ENCODE measurements at regions of chr2 and their contacts with region 1.

Region 1: GRCh38 chr2:28566521-28567041 is 70.7 kb downstream of the PLB1 start:
- DNase-seq: peak; percentile 65
- ATAC-seq: peak; percentile 96
- H3K4me3 ChIP-seq: peak overlapping the region; percentile 54 to 77 (median 69)
- H3K27ac ChIP-seq: no peak overlapping the region
- H3K4me1 ChIP-seq: peaks cover 7% of the 10 kb centered on the region
- H3K27me3 ChIP-seq: peaks cover 0 to 28% of the 10 kb centered on the region in 2 experiments; a peak in 4 of 5 replicates
- CTCF ChIP-seq: peak; percentile 96
- EP300 ChIP-seq: 0 out of 4 replicates have a peak, but pooled peaks of 1 of the 2 experiments have one; percentile 53
- POLR2A ChIP-seq: no peak
- RAD21 ChIP-seq: peak; percentile 96

Region 2: DNA sequence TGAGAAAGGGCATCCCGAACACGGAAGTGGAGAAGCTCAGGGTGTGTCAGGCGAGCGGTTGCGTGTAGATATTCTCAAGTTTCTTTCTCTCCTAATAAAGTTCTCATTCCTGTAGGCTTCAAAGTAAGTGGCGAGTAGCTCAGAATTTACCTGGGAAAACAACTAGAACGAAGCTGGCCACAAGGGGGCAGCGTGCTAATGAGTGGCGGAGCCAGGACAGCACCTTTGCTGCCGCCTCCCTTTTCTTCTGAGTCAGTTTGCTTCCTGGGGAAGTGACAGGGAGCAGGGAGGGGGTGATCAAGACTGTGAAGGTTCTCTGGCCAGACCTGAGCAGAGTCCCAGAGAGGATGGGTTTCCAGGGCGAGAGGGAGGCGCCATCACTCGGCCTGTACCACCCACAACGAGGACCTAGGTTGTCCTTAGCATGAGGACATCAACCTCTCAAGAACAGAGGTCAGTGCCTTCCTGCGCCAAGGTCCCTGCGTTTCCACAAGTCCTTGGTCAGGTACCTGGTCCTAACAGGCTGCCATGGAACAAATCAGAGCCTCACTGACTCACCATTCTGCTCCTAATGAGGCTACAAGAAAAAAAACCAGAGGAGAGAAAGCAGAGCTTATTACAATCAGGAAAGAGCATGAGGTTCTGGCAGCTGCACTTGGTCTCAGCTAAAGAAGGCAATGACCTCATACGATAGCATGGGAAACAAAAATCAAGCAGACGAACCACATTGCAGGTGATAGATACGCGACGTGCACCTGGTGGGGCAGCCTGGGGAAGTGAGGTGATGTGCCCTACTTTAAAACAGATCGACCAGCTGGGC is 27.9 kb after region 1 on chr2:
- CTCF ChIA-PET with region 1: interaction called, 18 read pairs
- POLR2A ChIA-PET with region 1: no interaction called
- in situ Hi-C with region 1: no loop called
- intact Hi-C with region 1: no loop called
- DNase-seq: peak; percentile 72
- ATAC-seq: peak; percentile 83
- H3K4me3 ChIP-seq: peak overlapping the region in 1 of 3 experiments; percentile 31; a peak in 1 of 6 replicates
- H3K27ac ChIP-seq: no peak overlapping the region
- H3K4me1 ChIP-seq: peaks cover 16% of the 10 kb centered on the region
- H3K27me3 ChIP-seq: peaks cover 4 to 38% of the 10 kb centered on the region in 2 experiments; a peak in 4 of 5 replicates
- CTCF ChIP-seq: peak; percentile 95
- EP300 ChIP-seq: no peak
- POLR2A ChIP-seq: no peak
- RAD21 ChIP-seq: peak; percentile 82

Region 3: DNA sequence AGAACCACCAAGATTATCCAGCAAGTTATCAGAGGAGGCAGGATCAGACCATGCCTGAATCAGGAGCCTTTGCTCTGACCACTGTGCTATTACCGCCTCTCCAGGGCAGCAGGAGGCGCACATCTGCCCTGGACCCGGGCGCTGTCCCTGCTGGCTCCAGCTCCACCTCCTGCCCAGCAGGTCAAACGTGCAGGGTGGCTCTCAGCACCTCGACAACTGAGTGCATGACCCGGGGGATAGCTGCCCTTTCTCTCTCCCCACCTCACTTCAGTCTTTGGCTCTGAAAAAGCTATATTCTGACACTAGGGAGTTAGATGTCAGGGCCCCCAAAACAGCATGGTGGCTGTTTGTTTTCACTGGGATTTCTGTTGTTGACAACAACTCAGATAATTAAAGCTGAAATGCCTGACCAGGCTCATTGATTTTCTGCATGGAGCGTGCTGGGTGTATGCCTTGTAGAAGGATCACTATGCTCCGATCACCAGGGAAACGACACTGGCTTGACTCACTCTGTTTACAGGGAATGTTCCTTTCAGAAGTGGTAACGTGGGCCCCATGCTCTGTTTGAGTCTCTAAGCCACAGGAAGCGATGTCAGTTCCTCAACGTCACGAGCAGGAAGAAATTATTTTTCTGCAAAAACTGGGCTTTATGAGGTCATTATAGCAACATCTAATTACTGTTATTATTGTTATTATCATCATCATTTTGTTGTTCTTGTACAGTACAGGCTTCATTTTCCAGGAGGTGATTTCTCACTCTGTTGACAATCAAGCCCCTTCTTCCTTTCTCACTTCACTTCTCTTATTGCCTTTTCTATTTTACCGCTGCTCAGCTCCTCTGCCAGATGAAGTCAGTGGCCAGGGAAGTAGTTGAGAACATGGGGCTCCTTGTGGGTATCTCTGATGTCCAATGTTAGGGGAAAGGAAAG is 54.9 kb after region 1 on chr2:
- CTCF ChIA-PET with region 1: no interaction called
- POLR2A ChIA-PET with region 1: no interaction called
- in situ Hi-C with region 1: no loop called
- intact Hi-C with region 1: loop called (anchors 5 kb)
- DNase-seq: peak; percentile 83
- ATAC-seq: peak; percentile 91
- H3K4me3 ChIP-seq: peak overlapping the region in 2 of 3 experiments; percentile 3 to 54; a peak in 4 of 6 replicates
- H3K27ac ChIP-seq: peak overlapping the region; percentile 61
- H3K4me1 ChIP-seq: peaks cover 59% of the 10 kb centered on the region
- H3K27me3 ChIP-seq: no peaks in the 10 kb centered on the region; a peak in 1 of 5 replicates
- CTCF ChIP-seq: peak; percentile 94
- EP300 ChIP-seq: peak in 1 of 2 experiments; percentile 69; a peak in 1 of 4 replicates
- POLR2A ChIP-seq: no peak
- RAD21 ChIP-seq: peak; percentile 90

Region 4: GRCh38 chr2:29206941-29207340 is 640.4 kb after region 1 on chr2:
- CTCF ChIA-PET with region 1: no interaction called
- POLR2A ChIA-PET with region 1: no interaction called
- in situ Hi-C with region 1: no loop called
- intact Hi-C with region 1: no loop called
- DNase-seq: peak; percentile 12
- ATAC-seq: peak; percentile 83
- H3K4me3 ChIP-seq: no peak overlapping the region
- H3K27ac ChIP-seq: no peak overlapping the region
- H3K4me1 ChIP-seq: no peaks in the 10 kb centered on the region
- H3K27me3 ChIP-seq: peaks cover 0 to 39% of the 10 kb centered on the region in 2 experiments; a peak in 3 of 5 replicates
- CTCF ChIP-seq: 0 out of 2 replicates have a peak, but pooled peaks have one; percentile 16
- EP300 ChIP-seq: no peak
- POLR2A ChIP-seq: no peak
- RAD21 ChIP-seq: no peak